K562 (cell line): ENCODE measurements at regions of chr9 and their contacts with region 1.

Region 1: GRCh38 chr9:124133727-124134126 is 122.2 kb downstream of the LHX2 start:
- DNase-seq: peak in 2 of 4 experiments; percentile 58 to 75
- ATAC-seq: peak; percentile 97
- H3K4me3 ChIP-seq: no peak overlapping the region
- H3K27ac ChIP-seq: no peak overlapping the region
- H3K4me1 ChIP-seq: peaks cover 0 to 3% of the 10 kb centered on the region in 2 experiments; a peak in 3 of 5 replicates
- H3K27me3 ChIP-seq: peaks cover 2 to 9% of the 10 kb centered on the region in 2 experiments; a peak in 2 of 5 replicates
- CTCF ChIP-seq: peak; percentile 73 to 81 (median 80)
- EP300 ChIP-seq: no peak
- POLR2A ChIP-seq: no peak
- RAD21 ChIP-seq: peak; percentile 89 to 93

Region 2: DNA sequence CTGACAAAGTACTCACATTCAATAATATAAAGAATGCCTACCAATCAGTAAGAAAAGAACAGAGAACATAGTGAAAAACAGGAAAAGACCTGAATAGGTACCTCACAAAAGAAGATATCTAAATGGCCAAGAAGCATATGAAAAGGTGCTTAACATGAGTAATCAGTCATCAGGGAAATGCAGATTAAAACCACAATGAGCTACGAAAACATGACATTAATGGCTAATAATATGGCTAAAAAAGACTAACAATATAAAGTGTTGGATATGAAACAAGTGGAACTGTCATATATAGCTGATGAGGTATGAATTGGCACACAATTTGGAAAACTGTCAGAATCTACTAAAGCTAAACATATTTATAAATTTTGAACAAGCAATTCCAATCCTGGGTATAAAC is 222.7 kb before region 1 on chr9:
- CTCF ChIA-PET with region 1: no interaction called
- POLR2A ChIA-PET with region 1: no interaction called
- in situ Hi-C with region 1: no loop called
- intact Hi-C with region 1: no loop called
- DNase-seq: no peak
- ATAC-seq: no peak
- H3K4me3 ChIP-seq: no peak overlapping the region
- H3K27ac ChIP-seq: no peak overlapping the region
- H3K4me1 ChIP-seq: peaks cover 0 to 5% of the 10 kb centered on the region in 2 experiments; a peak in 1 of 5 replicates
- H3K27me3 ChIP-seq: no peaks in the 10 kb centered on the region
- CTCF ChIP-seq: no peak
- EP300 ChIP-seq: no peak
- POLR2A ChIP-seq: no peak
- RAD21 ChIP-seq: no peak

Region 3: GRCh38 chr9:124098141-124099090 is 35.3 kb before region 1 on chr9:
- CTCF ChIA-PET with region 1: no interaction called
- POLR2A ChIA-PET with region 1: no interaction called
- in situ Hi-C with region 1: no loop called
- intact Hi-C with region 1: no loop called
- DNase-seq: no peak
- ATAC-seq: no peak
- H3K4me3 ChIP-seq: no peak overlapping the region
- H3K27ac ChIP-seq: no peak overlapping the region
- H3K4me1 ChIP-seq: no peaks in the 10 kb centered on the region
- H3K27me3 ChIP-seq: peaks cover 34 to 79% of the 10 kb centered on the region in 2 experiments
- CTCF ChIP-seq: no peak
- EP300 ChIP-seq: no peak
- POLR2A ChIP-seq: no peak
- RAD21 ChIP-seq: no peak

Region 4: GRCh38 chr9:124208571-124208970 is 74.8 kb after region 1 on chr9:
- CTCF ChIA-PET with region 1: no interaction called
- POLR2A ChIA-PET with region 1: no interaction called
- in situ Hi-C with region 1: no loop called
- intact Hi-C with region 1: loop called (anchors 5 kb)
- DNase-seq: no peak
- ATAC-seq: no peak
- H3K4me3 ChIP-seq: no peak overlapping the region
- H3K27ac ChIP-seq: no peak overlapping the region
- H3K4me1 ChIP-seq: peaks cover 4 to 14% of the 10 kb centered on the region in 2 experiments; a peak in 2 of 5 replicates
- H3K27me3 ChIP-seq: peaks cover 0 to 3% of the 10 kb centered on the region in 2 experiments; a peak in 3 of 5 replicates
- CTCF ChIP-seq: no peak
- EP300 ChIP-seq: no peak
- POLR2A ChIP-seq: no peak
- RAD21 ChIP-seq: no peak

Region 5: DNA sequence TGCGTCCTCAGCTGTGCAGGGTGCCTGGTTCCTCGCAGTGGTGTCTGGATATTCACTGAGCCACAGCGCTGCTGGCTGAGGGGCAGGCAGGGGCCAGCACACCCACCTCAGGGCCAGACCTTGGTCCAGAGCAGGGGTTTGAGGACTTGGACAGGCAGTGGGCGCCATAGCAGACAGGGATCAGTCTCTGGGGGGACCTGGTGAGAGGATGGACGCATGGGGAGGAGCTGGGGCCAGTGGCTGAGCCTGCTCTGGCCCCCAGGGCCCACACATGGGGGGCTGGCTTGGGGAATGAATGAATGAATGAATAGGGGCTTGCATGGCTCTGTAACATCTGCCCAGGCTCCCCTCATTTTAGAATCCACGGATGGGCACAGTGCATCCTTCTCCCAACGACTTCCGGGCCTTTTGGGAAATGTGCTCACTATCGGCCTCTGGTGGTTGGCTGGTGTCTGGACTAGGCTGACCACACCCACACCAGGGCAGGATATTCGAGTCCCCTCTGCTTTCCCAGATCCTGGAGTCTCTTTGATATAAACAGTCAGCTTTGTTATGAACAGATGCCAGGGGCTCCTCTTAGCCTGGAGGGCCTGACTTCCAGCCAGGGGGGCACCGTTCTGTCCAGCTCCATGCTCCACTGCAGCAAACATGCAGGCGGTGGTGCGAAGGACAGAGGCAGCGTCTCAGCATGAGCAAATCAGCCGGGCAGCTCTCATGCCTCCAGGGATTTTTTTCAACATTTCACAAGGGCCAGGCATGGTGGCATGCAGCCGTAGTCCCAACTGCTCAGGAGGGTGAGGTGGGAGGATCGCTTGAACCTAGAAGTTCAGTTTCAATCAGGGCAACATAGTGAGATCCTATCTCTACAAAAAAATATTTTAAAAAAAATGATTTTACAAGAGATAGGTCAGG is 186.6 kb after region 1 on chr9:
- CTCF ChIA-PET with region 1: interaction called, 16 read pairs
- POLR2A ChIA-PET with region 1: no interaction called
- in situ Hi-C with region 1: loop called (anchors 5 kb)
- intact Hi-C with region 1: loop called (anchors 1 kb)
- DNase-seq: peak; percentile 76 to 85 (median 82)
- ATAC-seq: peak; percentile 93
- H3K4me3 ChIP-seq: no peak overlapping the region
- H3K27ac ChIP-seq: no peak overlapping the region
- H3K4me1 ChIP-seq: peaks cover 11 to 24% of the 10 kb centered on the region in 2 experiments
- H3K27me3 ChIP-seq: no peaks in the 10 kb centered on the region
- CTCF ChIP-seq: peak; percentile 84 to 95 (median 90)
- EP300 ChIP-seq: no peak
- POLR2A ChIP-seq: no peak
- RAD21 ChIP-seq: peak; percentile 61 to 79

Region 6: GRCh38 chr9:124392871-124393460 is 259.2 kb after region 1 on chr9:
- CTCF ChIA-PET with region 1: no interaction called
- POLR2A ChIA-PET with region 1: interaction called, 4 read pairs
- in situ Hi-C with region 1: no loop called
- intact Hi-C with region 1: loop called (anchors 5 kb)
- DNase-seq: peak; percentile 47 to 66 (median 52)
- ATAC-seq: peak; percentile 73
- H3K4me3 ChIP-seq: no peak overlapping the region
- H3K27ac ChIP-seq: peak overlapping the region; percentile 16; the same call in 2 of the 3 replicates
- H3K4me1 ChIP-seq: peaks cover 31 to 57% of the 10 kb centered on the region in 2 experiments
- H3K27me3 ChIP-seq: no peaks in the 10 kb centered on the region
- CTCF ChIP-seq: peak; percentile 55 to 77 (median 73)
- EP300 ChIP-seq: no peak; the same call in 1 of the 2 replicates
- POLR2A ChIP-seq: no peak
- RAD21 ChIP-seq: peak; percentile 15 to 42